AG04449 (cell line): ENCODE measurements at regions of chr9 and their contacts with region 1.

Region 1: DNA sequence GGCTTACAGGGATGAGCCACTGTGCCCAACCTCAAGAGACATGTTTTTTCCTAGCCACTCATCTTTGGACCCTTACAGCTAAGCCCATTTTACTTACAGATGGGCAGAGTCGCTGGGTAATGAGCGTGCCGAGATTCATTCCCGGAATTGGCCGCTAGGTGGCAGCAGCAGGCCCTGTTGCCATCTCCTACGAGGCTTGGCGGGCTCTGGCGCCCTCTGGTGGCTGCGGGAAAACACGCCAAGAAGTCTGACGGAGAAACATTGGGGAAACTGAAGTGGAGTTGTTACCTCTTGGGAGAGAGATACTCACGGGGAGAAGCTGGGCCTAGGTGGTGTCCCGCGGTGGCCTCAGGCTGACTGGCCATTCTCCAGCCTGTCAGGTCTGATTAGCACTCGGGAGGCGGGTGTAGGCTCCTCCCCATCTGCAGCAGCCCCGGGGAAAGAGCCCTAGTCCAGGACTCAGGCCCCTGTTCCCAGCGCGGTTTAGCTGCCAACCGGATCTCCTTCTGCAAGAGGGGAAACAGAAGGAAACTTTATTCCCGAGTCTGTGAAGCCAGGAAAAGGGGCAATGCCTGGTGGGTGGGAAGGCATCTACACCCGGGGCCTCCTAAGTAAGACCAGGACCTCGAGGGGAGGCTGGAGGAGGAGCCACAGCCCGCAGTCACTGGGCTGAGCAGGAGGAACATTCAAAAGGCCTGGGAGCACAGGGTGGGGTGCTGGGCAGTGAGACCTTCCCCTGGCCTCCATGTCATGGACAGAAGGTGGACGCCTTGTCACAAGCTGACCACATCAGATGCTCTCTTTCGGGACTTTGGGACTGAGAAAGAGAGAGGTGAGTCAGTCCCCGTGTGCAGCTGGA is 9.7 kb downstream of the PTGES2 start:
- DNase-seq: no peak
- H3K4me3 ChIP-seq: peak overlapping the region; percentile 12; the same call in 1 of the 2 replicates
- CTCF ChIP-seq: peak; percentile 100

Region 2: GRCh38 chr9:127916665-127917613 is 200.9 kb before region 1 on chr9 and contains the start of gene ST6GALNAC4:
- CTCF ChIA-PET with region 1: interaction called, 21 read pairs
- POLR2A ChIA-PET with region 1: no interaction called
- DNase-seq: no peak
- H3K4me3 ChIP-seq: peak within 1 kb of the TSS; percentile 74
- CTCF ChIP-seq: no peak

Region 3: DNA sequence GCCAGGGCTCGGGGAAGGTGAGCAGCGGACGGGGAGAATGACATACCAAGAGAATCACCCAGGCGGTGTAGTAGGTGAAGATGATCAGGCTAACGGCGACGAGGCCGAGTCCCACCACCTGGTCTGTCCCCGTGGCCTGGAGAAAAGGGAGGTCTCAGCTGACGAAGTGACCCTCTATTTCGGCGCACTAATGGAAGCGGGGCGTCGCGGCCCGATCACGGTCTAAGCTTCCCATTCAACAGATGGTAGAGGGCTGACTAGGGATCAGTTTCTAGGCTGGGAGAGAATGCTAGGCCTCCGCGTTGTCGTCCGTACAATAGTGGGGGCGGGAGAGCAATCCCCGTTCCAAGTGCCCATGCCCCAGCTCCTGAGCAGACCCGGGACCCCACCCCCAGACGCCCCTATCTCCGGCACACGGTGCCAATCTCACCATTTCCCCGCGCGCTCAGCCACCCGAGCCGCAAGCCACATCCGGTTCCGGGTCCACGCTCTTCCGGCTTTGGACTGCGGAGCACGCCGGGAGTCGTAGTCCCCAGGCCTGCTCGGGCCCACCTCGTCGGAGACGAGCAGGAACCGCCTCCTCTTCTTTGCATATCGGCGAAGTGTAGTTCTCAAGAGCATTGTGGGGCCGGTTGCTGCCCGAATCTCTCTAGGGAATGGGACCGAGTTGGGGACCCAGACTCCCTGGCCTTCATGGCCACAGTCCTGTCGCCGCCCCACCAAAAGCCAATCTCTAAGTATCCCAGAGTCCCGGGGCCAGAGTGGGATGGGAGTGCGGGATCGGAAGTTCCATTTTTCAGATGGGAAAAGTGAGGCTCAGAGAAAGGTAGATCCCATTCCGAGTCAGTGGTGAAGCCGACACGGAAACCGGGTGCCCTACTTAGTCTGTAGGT is 180.2 kb before region 1 on chr9 and contains the start of gene DPM2:
- CTCF ChIA-PET with region 1: interaction called, 149 read pairs
- POLR2A ChIA-PET with region 1: interaction called, 3 read pairs
- DNase-seq: no peak
- H3K4me3 ChIP-seq: peak within 1 kb of the TSS; percentile 68
- CTCF ChIP-seq: no peak

Region 4: GRCh38 chr9:128051932-128052709 is 65.7 kb before region 1 on chr9:
- CTCF ChIA-PET with region 1: interaction called, 12 read pairs
- POLR2A ChIA-PET with region 1: no interaction called
- DNase-seq: no peak
- H3K4me3 ChIP-seq: no peak overlapping the region
- CTCF ChIP-seq: no peak

Region 5: GRCh38 chr9:128088253-128088945 is 29.4 kb before region 1 on chr9:
- CTCF ChIA-PET with region 1: interaction called, 65 read pairs
- POLR2A ChIA-PET with region 1: no interaction called
- DNase-seq: no peak
- H3K4me3 ChIP-seq: no peak overlapping the region
- CTCF ChIP-seq: no peak

Region 6: GRCh38 chr9:128103589-128103962 is 14.3 kb before region 1 on chr9:
- CTCF ChIA-PET with region 1: interaction called, 264 read pairs
- POLR2A ChIA-PET with region 1: interaction called, 4 read pairs
- DNase-seq: no peak
- H3K4me3 ChIP-seq: no peak overlapping the region
- CTCF ChIP-seq: no peak

Region 7: DNA sequence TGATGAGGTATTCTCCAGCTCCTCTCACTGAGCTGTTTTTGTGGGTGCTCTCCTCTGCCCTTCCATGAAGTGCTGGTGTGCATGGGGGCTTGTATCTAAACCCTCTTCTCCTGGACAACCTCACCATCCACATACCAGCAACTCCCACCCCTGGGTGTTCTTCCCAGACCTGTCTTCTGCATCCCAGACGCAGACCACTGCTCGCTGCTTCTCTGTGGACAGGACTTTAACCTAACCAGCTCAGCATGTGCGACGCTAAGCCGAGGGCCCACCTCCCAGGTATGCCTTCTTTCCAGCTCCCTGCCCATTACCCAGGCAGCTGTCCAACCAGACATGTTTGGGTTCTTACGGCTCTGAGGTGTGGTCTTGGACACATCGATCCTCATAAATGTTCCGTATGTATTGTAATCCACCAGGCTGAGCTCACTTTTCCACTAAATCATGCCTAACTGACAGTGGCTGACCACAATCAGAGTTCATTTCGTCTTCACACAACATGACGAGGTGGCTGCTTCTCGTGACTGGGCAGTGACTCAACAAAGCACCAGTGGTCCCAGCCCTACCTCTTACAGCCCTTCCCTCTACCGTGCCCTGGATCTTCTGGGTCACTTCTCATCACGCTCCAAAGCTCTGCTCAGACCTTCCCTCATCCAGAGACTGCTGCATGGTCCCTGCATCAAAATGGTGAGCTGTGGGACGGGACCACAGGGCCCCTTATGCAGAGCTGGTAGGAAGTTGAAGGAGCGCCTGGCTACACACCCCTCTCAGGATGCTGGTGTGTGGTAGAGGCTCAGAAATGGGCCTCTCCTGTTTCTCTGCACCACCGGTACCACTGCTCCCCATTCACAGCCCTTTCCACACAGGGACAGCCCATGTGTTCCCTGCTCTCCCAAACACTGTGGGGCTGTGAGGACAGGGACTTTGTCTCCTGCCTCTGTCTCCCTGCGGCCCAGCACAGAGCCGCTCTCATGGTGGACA is 19.3 kb after region 1 on chr9:
- CTCF ChIA-PET with region 1: interaction called, 10 read pairs
- POLR2A ChIA-PET with region 1: no interaction called
- DNase-seq: no peak
- H3K4me3 ChIP-seq: no peak overlapping the region
- CTCF ChIP-seq: no peak

Region 8: DNA sequence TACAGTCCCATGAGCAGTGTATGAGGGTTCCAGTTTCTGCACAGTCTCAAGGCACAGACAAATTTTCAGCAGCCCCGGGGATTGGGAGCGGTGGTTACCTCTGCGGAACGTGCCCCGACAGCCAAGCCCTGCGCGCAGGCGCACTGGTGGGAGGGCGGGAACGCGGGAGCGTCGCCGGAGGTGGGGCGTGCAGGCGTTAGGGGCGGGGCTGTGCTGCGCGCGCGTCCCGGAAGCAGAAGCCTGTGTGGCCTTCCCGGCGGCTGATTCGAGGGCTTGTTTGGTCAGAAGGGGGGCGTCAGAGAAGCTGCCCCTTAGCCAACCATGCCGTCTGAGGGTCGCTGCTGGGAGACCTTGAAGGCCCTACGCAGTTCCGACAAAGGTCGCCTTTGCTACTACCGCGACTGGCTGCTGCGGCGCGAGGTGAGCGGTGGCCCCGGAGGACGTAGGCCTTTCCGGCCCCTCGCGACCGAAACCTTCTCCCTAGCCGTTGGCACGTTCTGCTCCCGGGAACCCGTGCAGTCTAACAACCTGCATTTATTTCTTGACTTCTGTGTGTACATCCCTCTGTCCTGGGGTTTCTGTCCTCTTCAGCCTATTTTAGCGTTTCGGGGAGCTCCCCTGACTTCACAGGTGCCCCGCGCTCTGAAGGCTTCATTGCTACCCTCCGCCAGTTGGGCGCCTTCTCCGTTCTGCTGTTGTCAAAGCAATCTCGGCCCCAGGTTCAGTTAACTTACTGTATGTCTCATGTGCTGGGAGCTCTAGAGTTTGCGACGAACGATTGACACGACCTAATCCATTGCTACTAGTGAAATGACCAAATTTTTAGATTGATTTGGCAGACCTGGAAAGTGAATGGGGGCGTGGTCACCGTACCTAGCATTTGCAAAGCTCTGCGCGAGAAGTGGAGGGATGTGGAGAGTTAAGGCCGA is 386.9 kb after region 1 on chr9 and contains the start of gene GLE1:
- CTCF ChIA-PET with region 1: no interaction called
- POLR2A ChIA-PET with region 1: no interaction called
- DNase-seq: peak; percentile 34
- H3K4me3 ChIP-seq: peak within 1 kb of the TSS; percentile 99
- CTCF ChIP-seq: no peak

Region 9: DNA sequence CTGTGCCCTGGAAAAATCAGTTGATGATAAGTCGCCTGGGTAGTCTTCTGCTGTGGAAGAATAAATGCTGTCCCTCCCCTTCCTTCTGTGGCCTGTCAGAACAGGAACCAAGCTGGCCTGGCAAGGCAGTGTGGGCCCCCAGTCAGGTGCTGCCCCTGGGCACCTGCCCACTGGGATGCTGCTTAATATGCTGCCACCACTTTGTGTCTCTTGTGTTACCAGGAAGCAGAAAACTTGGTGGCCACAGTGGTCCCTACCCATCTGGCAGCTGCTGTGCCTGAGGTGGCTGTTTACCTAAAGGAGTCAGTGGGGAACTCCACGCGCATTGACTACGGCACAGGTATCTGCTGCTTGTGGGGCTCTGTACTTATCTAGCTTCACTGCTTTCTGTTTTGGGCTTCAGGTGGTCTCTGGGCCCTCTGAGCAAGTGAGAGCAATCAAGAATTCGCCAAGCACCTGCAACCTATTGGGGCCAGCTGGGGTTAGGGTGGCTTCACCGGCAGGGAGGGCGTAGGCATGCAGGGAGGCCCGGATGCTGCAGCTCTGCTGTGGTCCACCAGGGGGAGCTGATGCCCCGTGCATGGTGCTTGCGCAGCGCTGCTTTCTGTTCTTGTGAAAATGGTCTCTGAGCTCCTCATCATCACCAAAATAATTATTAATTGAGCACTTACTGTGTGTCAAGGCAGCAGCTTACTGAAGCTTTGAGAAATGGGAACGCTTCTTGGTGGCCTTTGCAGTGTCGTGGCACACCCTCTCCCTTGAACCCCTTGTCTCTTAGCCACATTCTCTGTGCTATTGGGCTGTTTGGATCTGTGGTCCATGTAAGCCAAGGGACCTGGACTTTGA is 1013.7 kb after region 1 on chr9:
- CTCF ChIA-PET with region 1: no interaction called
- POLR2A ChIA-PET with region 1: no interaction called
- DNase-seq: no peak
- H3K4me3 ChIP-seq: no peak overlapping the region
- CTCF ChIP-seq: peak; percentile 99